Caco-2 (cell line): ENCODE measurements at regions of chr4 and their contacts with region 1.

Region 1: DNA sequence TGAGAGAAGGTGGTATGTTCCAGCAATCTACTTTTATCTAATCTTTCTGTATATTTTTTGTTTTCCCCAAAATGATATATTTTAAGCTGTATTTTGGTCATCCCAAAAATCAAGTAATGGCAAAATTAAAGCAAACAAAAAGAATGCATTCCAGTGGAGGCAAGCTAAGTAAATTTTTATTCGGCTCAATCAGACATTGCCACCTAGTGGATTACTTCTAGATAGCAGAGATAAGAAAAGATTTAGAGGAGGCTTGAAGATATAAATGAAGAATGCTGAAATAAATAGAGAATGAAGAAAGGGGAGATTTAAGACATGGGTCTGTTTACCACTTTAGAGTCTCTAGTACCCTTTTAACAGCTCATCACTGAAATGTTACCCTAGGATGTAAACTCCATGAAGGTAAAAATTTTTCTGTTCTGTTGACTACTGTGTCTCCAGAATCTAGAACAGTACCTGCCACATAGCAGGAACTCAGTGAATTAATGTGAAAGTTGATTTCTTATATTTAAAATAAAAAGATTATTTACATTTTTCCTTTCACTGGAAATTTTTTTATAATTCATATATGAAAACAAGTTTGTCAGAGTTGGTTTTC is 110.9 kb upstream of the ANK2 start:
- DNase-seq: peak in 1 of 2 experiments; percentile 31
- H3K4me3 ChIP-seq: no peak overlapping the region
- H3K4me3 Mint-ChIP-seq: no peak overlapping the region
- H3K27ac Mint-ChIP-seq: no peak overlapping the region
- H3K4me1 ChIP-seq: peaks cover 10% of the 10 kb centered on the region
- H3K4me1 Mint-ChIP-seq: no peaks in the 10 kb centered on the region
- H3K27me3 ChIP-seq: no peaks in the 10 kb centered on the region
- H3K27me3 Mint-ChIP-seq: no peaks in the 10 kb centered on the region
- CTCF ChIP-seq: peak; percentile 59 to 67

Region 2: GRCh38 chr4:112765317-112765975 is 173.1 kb before region 1 on chr4:
- CTCF ChIA-PET with region 1: interaction called, 24 read pairs
- POLR2A ChIA-PET with region 1: no interaction called
- intact Hi-C with region 1: no loop called
- DNase-seq: peak in 1 of 2 experiments; percentile 33
- H3K4me3 ChIP-seq: no peak overlapping the region
- H3K4me3 Mint-ChIP-seq: no peak overlapping the region
- H3K27ac Mint-ChIP-seq: no peak overlapping the region
- H3K4me1 ChIP-seq: 0 out of 2 replicates have a peak, but pooled peaks cover 3% of the 10 kb centered on the region
- H3K4me1 Mint-ChIP-seq: peaks cover 10% of the 10 kb centered on the region
- H3K27me3 ChIP-seq: no peaks in the 10 kb centered on the region
- H3K27me3 Mint-ChIP-seq: no peaks in the 10 kb centered on the region
- CTCF ChIP-seq: peak; percentile 39 to 45

Region 3: GRCh38 chr4:112895811-112896608 is 42.5 kb before region 1 on chr4:
- CTCF ChIA-PET with region 1: interaction called, 9 read pairs
- POLR2A ChIA-PET with region 1: no interaction called
- intact Hi-C with region 1: loop called (anchors 1 kb)
- DNase-seq: no peak
- H3K4me3 ChIP-seq: no peak overlapping the region
- H3K4me3 Mint-ChIP-seq: peak overlapping the region; percentile 29
- H3K27ac Mint-ChIP-seq: peak overlapping the region; percentile 21
- H3K4me1 ChIP-seq: peaks cover 60% of the 10 kb centered on the region
- H3K4me1 Mint-ChIP-seq: peaks cover 36% of the 10 kb centered on the region
- H3K27me3 ChIP-seq: no peaks in the 10 kb centered on the region
- H3K27me3 Mint-ChIP-seq: no peaks in the 10 kb centered on the region
- CTCF ChIP-seq: no peak